ENCODE measurements at regions of chr14 and their contacts with region 1.

Region 1: DNA sequence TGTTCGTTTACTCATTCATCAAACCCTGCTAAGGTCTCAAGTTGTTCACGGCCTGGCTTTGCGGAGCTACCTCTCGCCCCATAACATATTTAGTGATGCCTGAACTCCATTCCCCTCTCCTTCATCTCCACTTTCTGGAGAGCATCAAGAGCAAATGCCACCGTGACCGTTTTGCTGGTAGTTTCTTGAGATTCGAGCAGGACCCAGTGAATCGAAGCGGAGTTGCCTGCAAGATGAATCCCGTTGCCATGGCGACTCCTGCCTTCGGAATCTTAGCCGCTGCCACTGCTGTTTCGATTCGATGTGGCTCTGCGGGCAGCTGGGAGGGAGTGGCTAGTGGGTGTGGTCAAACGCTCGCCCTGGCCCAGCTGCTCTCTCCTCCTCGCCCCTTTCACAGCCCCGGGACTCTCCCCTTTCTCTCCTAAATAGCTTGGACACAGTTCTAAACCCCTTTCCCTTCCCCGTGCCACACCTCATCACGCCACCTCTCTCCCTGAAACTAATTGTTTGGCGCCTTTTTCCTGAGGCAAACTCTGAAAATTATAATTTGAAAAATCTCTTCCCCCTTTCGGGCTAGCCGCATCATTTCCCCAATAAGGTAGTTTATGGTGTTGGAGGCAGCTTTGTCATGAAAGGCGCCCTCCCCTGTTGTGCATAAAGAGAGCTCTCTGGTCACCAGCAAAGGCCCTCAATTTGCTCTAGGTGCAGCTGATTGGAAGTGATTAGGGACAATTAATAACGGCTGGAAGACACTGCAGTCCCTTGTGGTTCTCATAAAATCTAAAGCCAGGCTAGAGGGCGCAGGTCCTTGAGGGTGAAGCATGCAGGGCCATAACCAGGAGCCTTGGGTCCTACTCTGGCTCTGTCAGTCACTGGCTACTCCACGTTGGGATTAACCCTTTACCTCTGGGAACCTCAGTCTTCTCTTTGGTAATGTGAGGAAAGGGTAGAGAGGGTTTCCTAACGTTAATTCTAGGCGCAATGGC is 1.6 kb downstream of the DAAM1 start:
- DNase-seq: peak; percentile 61 to 95
- H3K4me3 ChIP-seq: peak overlapping the region; percentile 64 to 79
- H3K27ac ChIP-seq: peak overlapping the region; percentile 96 to 97
- H3K4me1 ChIP-seq: peaks cover 5 to 20% of the 10 kb centered on the region in 2 donors
- H3K27me3 ChIP-seq: no peaks in the 10 kb centered on the region
- CTCF ChIP-seq: no peak

Region 2: DNA sequence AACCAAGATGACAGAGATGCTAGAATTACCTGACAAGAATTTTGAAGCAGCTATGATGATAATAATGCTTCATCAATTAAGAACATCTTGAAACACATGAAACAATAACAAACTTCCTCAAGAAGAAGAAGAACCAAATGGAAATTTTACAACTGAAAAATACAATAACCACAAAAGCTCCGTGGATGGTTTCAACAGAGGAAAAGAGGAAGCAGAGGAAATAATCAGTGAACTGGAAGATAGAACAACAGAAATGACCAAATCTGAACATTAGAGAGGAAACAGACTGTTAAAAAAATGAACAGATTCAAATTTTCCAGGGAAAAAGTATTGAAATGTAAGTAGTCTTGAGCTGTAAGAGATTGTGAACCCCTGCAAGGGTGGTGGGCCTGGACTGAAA is 1261.3 kb before region 1 on chr14:
- intact Hi-C with region 1: no loop called
- DNase-seq: no peak
- H3K4me3 ChIP-seq: no peak overlapping the region
- H3K27ac ChIP-seq: no peak overlapping the region
- H3K4me1 ChIP-seq: no peaks in the 10 kb centered on the region
- H3K27me3 ChIP-seq: no peaks in the 10 kb centered on the region
- CTCF ChIP-seq: no peak

Region 3: GRCh38 chr14:59028476-59029202 is 161.4 kb before region 1 on chr14:
- intact Hi-C with region 1: no loop called
- DNase-seq: peak in 1 of 2 donors; percentile 68
- H3K4me3 ChIP-seq: no peak overlapping the region
- H3K27ac ChIP-seq: no peak overlapping the region
- H3K4me1 ChIP-seq: no peaks in the 10 kb centered on the region
- H3K27me3 ChIP-seq: no peaks in the 10 kb centered on the region
- CTCF ChIP-seq: peak; percentile 47 to 81 (median 66)

Region 4: DNA sequence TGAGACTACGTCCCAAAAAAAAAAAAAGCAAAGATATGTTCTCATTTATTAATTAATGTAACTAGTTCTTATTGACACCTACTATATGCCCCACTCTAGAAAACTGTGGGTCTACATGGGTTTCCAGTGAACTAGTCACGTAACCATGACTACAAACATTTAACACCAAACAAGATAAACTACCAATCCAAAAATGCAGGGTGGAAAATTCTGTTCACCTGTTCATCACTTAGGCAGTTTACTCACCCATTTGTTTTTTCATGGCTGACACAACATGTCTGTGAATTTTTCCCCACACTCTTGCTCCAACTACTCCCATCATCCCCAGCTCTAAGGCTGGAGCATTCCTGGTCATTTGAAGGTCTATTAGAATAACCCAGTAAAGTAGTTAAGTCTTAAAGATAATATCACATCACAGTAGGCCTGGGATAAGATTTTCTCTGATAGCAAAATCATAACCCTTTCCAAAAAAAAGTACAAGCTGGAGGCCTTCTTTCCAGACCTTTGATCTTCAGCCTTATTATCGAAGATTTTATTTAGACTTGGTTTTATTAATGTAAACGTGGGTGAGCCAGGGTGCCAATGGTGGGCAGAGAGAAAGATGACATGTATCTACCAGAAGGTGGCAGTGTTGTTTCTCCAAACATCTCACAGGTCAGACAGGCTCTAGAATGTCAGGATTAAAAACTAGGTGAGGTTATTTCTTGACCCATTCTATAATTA is 63.2 kb before region 1 on chr14:
- intact Hi-C with region 1: loop called (anchors 2 kb)
- DNase-seq: no peak
- H3K4me3 ChIP-seq: no peak overlapping the region
- H3K27ac ChIP-seq: no peak overlapping the region
- H3K4me1 ChIP-seq: no peaks in the 10 kb centered on the region
- H3K27me3 ChIP-seq: no peaks in the 10 kb centered on the region
- CTCF ChIP-seq: peak; percentile 77 to 81 (median 78)

Region 5: DNA sequence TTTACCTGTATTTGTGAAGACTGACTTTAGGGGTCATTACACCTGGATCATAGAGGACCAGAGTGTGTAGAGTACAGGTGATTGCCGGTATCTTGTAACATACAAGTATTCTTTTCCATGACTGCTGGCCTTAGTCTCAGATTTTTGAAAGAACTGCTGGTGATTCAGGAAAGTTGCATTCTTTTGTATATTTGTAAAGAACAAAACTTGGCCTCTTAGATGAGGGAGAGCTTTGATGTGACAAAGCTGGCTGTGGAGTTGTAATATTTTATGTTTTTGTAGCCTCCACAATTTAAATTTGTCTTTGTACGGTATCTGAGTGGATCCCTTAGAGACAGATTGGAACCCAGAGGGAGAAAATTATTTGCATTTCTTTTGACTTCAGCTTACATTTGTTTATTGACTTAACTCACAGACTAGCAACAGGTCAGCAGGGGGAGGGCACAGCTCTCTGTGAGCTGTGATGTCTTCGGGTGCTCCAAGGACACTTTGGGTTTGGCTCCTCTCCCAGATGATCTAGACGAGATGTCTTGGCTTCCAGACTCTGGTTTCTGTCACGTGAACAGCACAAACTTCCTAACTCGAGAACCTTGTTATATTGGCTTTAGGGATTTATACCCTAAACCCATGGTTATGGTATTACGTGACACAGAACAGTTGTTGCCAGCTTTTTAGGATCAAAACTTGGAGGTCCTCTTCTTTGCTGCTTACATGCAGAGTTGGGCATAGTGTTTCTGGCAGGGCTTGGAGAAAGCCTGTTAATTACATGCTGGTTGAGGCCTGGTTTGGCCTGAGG is 64.3 kb after region 1 on chr14:
- intact Hi-C with region 1: loop called (anchors 1 kb)
- DNase-seq: peak; percentile 24 to 77
- H3K4me3 ChIP-seq: peak overlapping the region in 1 of 2 donors; percentile 1
- H3K27ac ChIP-seq: peak overlapping the region; percentile 87 to 91
- H3K4me1 ChIP-seq: peaks cover 11 to 47% of the 10 kb centered on the region in 2 donors
- H3K27me3 ChIP-seq: no peaks in the 10 kb centered on the region
- CTCF ChIP-seq: no peak

Region 6: DNA sequence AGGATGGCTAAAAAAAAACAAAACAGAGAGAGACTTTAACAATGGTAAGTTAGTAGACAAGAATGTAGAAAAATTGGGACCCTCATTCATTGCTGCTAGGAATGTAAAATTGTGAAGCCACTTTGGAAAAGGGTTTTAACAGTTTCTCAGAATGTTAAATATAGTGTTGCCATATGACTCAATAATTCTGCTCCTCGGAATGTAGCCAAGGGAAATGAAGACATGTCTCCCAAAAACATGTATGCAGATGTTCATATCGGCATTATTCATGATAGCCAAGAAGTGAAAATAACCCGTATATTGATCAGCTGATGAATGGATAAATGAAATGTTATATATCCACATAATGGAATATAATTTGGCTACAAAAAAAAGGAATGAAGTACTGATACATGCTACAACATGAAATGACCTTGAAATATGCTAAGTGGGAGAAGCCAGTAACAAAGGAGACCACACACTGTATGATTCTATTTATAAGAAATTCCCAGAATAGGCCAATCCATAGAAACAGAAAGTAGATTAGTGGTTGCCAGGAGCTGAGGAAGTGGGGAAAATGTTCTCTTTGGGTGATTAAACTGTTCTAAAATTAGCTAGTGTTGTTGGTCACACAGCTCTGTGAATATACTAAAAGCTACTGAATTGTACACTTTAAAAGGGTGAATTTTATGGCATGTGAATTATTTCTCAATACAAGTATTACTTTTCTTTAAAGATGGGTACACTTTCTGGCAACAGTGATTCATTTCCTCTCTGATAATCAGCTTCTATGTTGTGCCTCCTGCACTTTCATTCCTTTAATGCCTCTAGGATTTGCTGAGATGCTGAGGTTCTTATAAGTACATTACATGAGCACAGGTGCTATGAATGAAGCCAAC is 130.9 kb after region 1 on chr14:
- intact Hi-C with region 1: loop called (anchors 2 kb)
- DNase-seq: no peak
- H3K4me3 ChIP-seq: peak overlapping the region in 1 of 2 donors; percentile 13
- H3K27ac ChIP-seq: peak overlapping the region; percentile 72 to 78
- H3K4me1 ChIP-seq: peaks cover 11 to 58% of the 10 kb centered on the region in 2 donors
- H3K27me3 ChIP-seq: no peaks in the 10 kb centered on the region
- CTCF ChIP-seq: no peak

Region 7: GRCh38 chr14:59422069-59422881 is 232.2 kb after region 1 on chr14:
- intact Hi-C with region 1: loop called (anchors 2 kb)
- DNase-seq: peak in 1 of 2 donors; percentile 70
- H3K4me3 ChIP-seq: no peak overlapping the region
- H3K27ac ChIP-seq: peak overlapping the region; percentile 65 to 72
- H3K4me1 ChIP-seq: peaks cover 7 to 35% of the 10 kb centered on the region in 2 donors
- H3K27me3 ChIP-seq: no peaks in the 10 kb centered on the region
- CTCF ChIP-seq: peak in 2 of 3 experiments; percentile 14 to 28

Region 8: DNA sequence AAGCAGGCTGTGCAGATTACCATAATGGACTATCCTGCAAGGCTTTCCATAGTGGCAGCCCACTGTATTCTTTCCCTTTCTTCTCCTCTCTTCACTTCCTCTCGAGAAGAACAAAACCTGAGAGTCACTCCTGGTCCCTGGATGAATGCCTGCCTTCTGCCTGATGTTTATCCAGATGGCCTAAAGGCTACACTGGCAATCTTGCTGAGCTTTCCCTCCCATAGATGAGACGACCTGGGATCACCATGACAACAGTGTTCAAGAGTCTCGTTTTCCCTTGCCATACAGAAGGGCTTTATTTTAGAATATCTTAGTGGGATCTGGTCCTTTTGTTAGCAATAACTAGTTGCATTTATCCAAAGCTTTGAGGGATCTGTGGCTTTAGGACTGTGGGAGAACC is 538.2 kb after region 1 on chr14:
- intact Hi-C with region 1: no loop called
- DNase-seq: no peak
- H3K4me3 ChIP-seq: no peak overlapping the region
- H3K27ac ChIP-seq: no peak overlapping the region
- H3K4me1 ChIP-seq: no peaks in the 10 kb centered on the region
- H3K27me3 ChIP-seq: no peaks in the 10 kb centered on the region
- CTCF ChIP-seq: no peak

Measured in ascending aorta (tissue), 2 donors.